Caco-2 (cell line): ENCODE measurements at regions of chr20 and their contacts with region 1.

Region 1: GRCh38 chr20:33992923-33993575 is 662 bp upstream of the RALY start:
- DNase-seq: peak; percentile 100
- H3K4me3 ChIP-seq: peak overlapping the region; percentile 88
- H3K4me3 Mint-ChIP-seq: peak overlapping the region; percentile 76
- H3K27ac Mint-ChIP-seq: peak overlapping the region; percentile 89
- H3K4me1 ChIP-seq: peaks cover 17% of the 10 kb centered on the region
- H3K4me1 Mint-ChIP-seq: peaks cover 3% of the 10 kb centered on the region
- H3K27me3 ChIP-seq: no peaks in the 10 kb centered on the region
- H3K27me3 Mint-ChIP-seq: no peaks in the 10 kb centered on the region
- CTCF ChIP-seq: no peak

Region 2: GRCh38 chr20:33686100-33686983 is 306.7 kb before region 1 on chr20 and contains the start of gene E2F1:
- CTCF ChIA-PET with region 1: no interaction called
- POLR2A ChIA-PET with region 1: interaction called, 3 read pairs
- intact Hi-C with region 1: loop called (anchors 5 kb)
- DNase-seq: peak; percentile 99 to 100
- H3K4me3 ChIP-seq: peak within 1 kb of the TSS; percentile 80
- H3K4me3 Mint-ChIP-seq: peak within 1 kb of the TSS; percentile 68
- H3K27ac Mint-ChIP-seq: peak within 1 kb of the TSS; percentile 78
- H3K4me1 ChIP-seq: peaks cover 46% of the 10 kb centered on the region
- H3K4me1 Mint-ChIP-seq: peaks cover 59% of the 10 kb centered on the region
- H3K27me3 ChIP-seq: no peaks in the 10 kb centered on the region
- H3K27me3 Mint-ChIP-seq: no peaks in the 10 kb centered on the region
- CTCF ChIP-seq: peak; percentile 56 to 64
- total RNA-seq, gene E2F1: 67.5 and 74.7 TPM in 2 replicates

Region 3: DNA sequence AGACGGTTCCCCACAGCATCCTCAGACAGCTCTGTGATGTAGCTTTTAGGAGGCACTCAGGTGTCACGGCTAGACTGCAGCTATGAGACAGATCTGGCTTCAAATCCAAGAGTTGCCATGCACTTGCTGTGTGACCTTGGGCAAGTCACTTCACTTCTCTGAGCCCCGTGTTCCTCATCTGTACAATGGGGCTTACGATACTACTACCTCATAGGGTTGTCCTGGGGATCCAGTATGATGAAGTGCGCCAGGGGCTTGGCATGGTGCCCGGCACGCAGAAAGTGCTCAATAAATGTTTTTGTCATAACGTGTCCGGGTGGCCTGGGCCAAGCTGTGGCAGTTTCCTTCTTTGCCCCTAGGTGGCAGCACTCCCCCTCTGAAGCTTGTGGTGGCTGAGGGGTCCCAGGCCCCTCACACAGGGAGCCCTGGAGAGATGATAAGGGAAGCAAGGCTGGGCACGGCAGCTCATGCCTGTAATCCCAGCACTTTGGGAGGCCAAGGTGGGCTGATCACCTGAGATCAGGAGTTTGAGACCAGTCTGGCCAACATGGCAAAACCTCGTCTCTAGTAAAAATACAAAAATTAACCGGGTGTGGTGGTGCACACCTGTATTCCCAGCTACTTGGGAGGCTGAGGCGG is 201.0 kb before region 1 on chr20:
- CTCF ChIA-PET with region 1: interaction called, 3 read pairs
- POLR2A ChIA-PET with region 1: interaction called, 8 read pairs
- intact Hi-C with region 1: loop called (anchors 5 kb)
- DNase-seq: peak in 1 of 2 experiments; percentile 77
- H3K4me3 ChIP-seq: no peak overlapping the region
- H3K4me3 Mint-ChIP-seq: no peak overlapping the region
- H3K27ac Mint-ChIP-seq: no peak overlapping the region
- H3K4me1 ChIP-seq: peaks cover 17% of the 10 kb centered on the region
- H3K4me1 Mint-ChIP-seq: peaks cover 18% of the 10 kb centered on the region
- H3K27me3 ChIP-seq: no peaks in the 10 kb centered on the region
- H3K27me3 Mint-ChIP-seq: no peaks in the 10 kb centered on the region
- CTCF ChIP-seq: peak; percentile 90 to 99

Region 4: GRCh38 chr20:33915726-33916331 is 77.2 kb before region 1 on chr20:
- CTCF ChIA-PET with region 1: interaction called, 7 read pairs
- POLR2A ChIA-PET with region 1: interaction called, 6 read pairs
- intact Hi-C with region 1: loop called (anchors 1 kb)
- DNase-seq: peak; percentile 72 to 79
- H3K4me3 ChIP-seq: no peak overlapping the region
- H3K4me3 Mint-ChIP-seq: no peak overlapping the region
- H3K27ac Mint-ChIP-seq: no peak overlapping the region
- H3K4me1 ChIP-seq: peaks cover 9% of the 10 kb centered on the region
- H3K4me1 Mint-ChIP-seq: peaks cover 24% of the 10 kb centered on the region
- H3K27me3 ChIP-seq: no peaks in the 10 kb centered on the region
- H3K27me3 Mint-ChIP-seq: no peaks in the 10 kb centered on the region
- CTCF ChIP-seq: peak; percentile 78 to 97

Region 5: DNA sequence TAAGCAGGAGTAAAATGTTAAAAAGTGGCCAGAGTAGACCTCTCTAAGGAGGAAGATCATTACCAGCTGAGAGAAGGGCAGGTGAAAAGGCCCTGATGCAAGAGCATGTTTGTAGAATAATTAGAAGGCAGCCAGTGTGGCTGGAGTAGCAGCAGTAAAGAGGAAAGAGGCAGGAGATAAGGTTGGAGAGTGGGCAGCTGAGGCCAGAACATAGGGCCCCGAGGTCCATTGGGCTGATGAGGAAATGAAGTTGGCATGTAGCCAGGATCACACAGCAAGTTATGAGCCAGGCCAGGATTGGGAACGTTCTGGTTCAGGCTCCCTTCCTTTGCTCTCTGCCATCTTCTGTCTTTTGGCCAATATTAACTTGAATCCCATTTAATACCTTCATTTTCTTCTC is 52.2 kb after region 1 on chr20:
- CTCF ChIA-PET with region 1: interaction called, 5 read pairs
- POLR2A ChIA-PET with region 1: interaction called, 19 read pairs
- intact Hi-C with region 1: loop called (anchors 1 kb)
- DNase-seq: peak in 1 of 2 experiments; percentile 32
- H3K4me3 ChIP-seq: no peak overlapping the region
- H3K4me3 Mint-ChIP-seq: no peak overlapping the region
- H3K27ac Mint-ChIP-seq: peak overlapping the region; percentile 17
- H3K4me1 ChIP-seq: peaks cover 42% of the 10 kb centered on the region
- H3K4me1 Mint-ChIP-seq: peaks cover 32% of the 10 kb centered on the region
- H3K27me3 ChIP-seq: no peaks in the 10 kb centered on the region
- H3K27me3 Mint-ChIP-seq: no peaks in the 10 kb centered on the region
- CTCF ChIP-seq: no peak

Region 6: DNA sequence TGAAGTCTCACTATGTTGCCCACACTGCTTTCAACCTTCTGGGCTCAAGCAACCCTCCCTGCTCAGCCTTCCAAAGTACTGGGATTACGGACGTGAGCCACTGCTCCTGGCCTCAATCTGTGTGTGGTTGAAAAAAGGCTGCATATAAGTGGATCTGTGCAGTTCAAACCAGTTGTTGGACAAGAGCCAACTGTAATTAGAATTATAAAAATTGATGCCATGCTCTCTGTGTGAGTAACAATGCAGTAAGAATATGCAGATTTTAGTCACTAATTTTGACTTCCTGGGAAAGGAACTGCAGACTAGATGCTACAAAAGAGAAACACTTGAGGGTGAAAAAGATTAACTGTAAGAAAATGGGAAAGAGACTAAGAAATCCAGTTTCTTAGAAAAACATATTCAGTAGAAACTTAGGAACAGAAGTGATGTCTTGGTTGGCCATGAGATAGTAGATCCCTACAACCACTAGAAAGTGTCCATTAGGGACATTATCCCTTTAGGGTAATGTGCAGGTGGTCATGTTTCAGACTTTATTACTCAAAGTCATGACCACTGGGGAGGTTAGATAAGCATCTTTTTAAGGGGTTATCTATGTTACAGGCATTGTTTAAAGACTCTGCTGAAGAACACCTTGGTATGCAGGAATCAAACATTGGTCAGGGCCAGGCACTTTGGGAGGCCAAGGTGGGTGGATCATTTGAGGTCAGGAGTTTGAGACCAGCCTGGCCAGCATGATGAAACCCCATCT is 396.3 kb after region 1 on chr20:
- CTCF ChIA-PET with region 1: no interaction called
- POLR2A ChIA-PET with region 1: no interaction called
- intact Hi-C with region 1: no loop called
- DNase-seq: peak; percentile 36 to 67
- H3K4me3 ChIP-seq: no peak overlapping the region
- H3K4me3 Mint-ChIP-seq: no peak overlapping the region
- H3K27ac Mint-ChIP-seq: peak overlapping the region; percentile 43
- H3K4me1 ChIP-seq: peaks cover 49% of the 10 kb centered on the region
- H3K4me1 Mint-ChIP-seq: peaks cover 47% of the 10 kb centered on the region
- H3K27me3 ChIP-seq: no peaks in the 10 kb centered on the region
- H3K27me3 Mint-ChIP-seq: no peaks in the 10 kb centered on the region
- CTCF ChIP-seq: no peak

Region 7: GRCh38 chr20:35263532-35264223 is 1270.6 kb after region 1 on chr20:
- CTCF ChIA-PET with region 1: no interaction called
- POLR2A ChIA-PET with region 1: interaction called, 15 read pairs
- intact Hi-C with region 1: no loop called
- DNase-seq: peak in 1 of 2 experiments; percentile 57
- H3K4me3 ChIP-seq: peak overlapping the region; percentile 13
- H3K4me3 Mint-ChIP-seq: peak overlapping the region; percentile 63
- H3K27ac Mint-ChIP-seq: peak overlapping the region; percentile 98
- H3K4me1 ChIP-seq: peaks cover 65% of the 10 kb centered on the region
- H3K4me1 Mint-ChIP-seq: peaks cover 48% of the 10 kb centered on the region
- H3K27me3 ChIP-seq: no peaks in the 10 kb centered on the region
- H3K27me3 Mint-ChIP-seq: no peaks in the 10 kb centered on the region
- CTCF ChIP-seq: no peak